ENCODE measurements at regions of chr3 and their contacts with region 1.

Region 1: DNA sequence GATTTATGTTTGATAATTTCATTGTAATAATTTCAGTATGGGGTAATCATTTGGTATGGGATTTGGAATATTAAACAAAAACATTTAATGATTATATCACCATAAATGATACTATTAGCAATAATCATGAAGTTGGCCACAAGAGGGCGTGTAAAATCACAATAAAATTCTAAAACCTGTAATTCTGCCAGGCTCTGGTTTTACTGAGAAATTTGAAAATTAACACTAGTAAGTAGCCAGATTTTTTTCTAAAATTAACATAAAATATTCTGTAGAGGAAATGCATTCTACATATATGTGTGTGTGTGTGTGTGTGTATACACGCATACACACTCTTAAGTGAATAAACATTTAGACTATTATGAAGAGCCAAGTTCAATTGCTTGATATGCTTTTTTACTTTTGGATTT is 40.5 kb downstream of the FEZF2 start:
- DNase-seq: no peak
- H3K4me3 ChIP-seq: no peak overlapping the region
- H3K27ac ChIP-seq: no peak overlapping the region
- H3K4me1 ChIP-seq: no peaks in the 10 kb centered on the region
- H3K27me3 ChIP-seq: no peaks in the 10 kb centered on the region
- CTCF ChIP-seq: peak in 7 of 11 experiments; percentile 12 to 52 (median 26)
- POLR2A ChIP-seq: no peak

Region 2: DNA sequence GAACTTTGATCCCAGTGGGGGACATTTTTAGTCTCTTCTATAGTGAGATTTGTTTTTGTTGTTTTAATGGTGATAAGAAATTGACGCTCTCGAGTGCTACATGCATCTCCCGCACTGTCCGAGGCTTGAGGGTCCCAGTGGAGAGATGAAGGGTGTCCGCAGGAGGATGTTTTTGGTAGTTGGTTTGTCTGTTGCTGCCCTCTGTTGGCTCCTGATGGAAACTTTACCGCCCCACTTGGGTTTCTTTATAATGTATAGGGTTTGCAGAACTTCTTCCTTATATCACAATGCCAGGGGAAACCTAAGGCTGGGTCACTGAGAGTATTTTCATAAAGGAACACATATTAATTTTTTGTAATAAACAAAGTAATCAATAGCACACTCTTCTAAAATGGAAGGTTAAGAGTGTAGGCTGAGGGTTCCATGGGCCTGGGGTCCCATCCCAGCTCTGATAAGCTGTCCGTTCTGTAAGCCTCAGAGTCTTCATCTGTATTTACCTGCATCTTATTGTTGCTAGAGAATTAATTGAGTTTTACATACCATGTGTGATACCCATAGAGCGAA is 225.8 kb after region 1 on chr3:
- intact Hi-C with region 1: loop called (anchors 10 kb)
- DNase-seq: no peak
- H3K4me3 ChIP-seq: no peak overlapping the region
- H3K27ac ChIP-seq: no peak overlapping the region
- H3K4me1 ChIP-seq: no peaks in the 10 kb centered on the region
- H3K27me3 ChIP-seq: no peaks in the 10 kb centered on the region
- CTCF ChIP-seq: peak in 1 of 11 experiments; percentile 7
- POLR2A ChIP-seq: no peak

Region 3: GRCh38 chr3:63043631-63044030 is 710.8 kb after region 1 on chr3:
- intact Hi-C with region 1: no loop called
- DNase-seq: no peak
- H3K4me3 ChIP-seq: no peak overlapping the region
- H3K27ac ChIP-seq: no peak overlapping the region
- H3K4me1 ChIP-seq: no peaks in the 10 kb centered on the region
- H3K27me3 ChIP-seq: no peaks in the 10 kb centered on the region
- CTCF ChIP-seq: no peak
- POLR2A ChIP-seq: no peak